CD8-positive, alpha-beta T cell (primary cell): ENCODE measurements at regions of chr5 and their contacts with region 1.

Region 1: GRCh38 chr5:179414459-179415261 is 69.4 kb upstream of the ADAMTS2 start:
- DNase-seq: peak in 2 of 9 experiments; percentile 1 to 13
- ATAC-seq: no peak
- H3K4me3 ChIP-seq: no peak overlapping the region
- H3K4me3 Mint-ChIP-seq: no peak overlapping the region
- H3K27ac ChIP-seq: no peak overlapping the region
- H3K27ac Mint-ChIP-seq: no peak overlapping the region
- H3K4me1 ChIP-seq: no peaks in the 10 kb centered on the region
- H3K4me1 Mint-ChIP-seq: no peaks in the 10 kb centered on the region
- H3K27me3 ChIP-seq: no peaks in the 10 kb centered on the region
- H3K27me3 Mint-ChIP-seq: peaks cover 5% of the 10 kb centered on the region
- CTCF ChIP-seq: no peak

Region 2: DNA sequence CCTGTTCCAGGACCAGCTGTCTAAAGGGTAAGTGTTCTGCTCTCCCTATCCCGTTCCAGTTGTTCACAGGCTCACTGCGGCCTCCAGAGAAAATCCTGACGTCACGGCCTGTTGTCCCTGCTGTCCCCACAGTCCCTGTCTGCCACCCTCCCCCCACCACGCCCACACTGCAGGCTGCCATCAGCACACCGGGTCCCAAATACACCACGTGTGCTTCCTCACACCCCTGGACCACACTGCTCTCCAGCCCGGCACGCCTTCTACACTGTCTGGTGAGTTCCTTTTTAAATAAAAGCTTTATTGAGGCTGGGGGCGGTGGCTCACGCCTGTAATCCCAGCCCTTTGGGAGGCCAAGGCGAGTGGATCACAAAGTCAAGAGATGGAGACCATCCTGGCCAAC is 47.4 kb after region 1 on chr5:
- CTCF ChIA-PET with region 1: no interaction called
- POLR2A ChIA-PET with region 1: no interaction called
- intact Hi-C with region 1: loop called in 1 of 2 experiments (anchors 2 kb)
- DNase-seq: no peak
- ATAC-seq: no peak
- H3K4me3 ChIP-seq: no peak overlapping the region
- H3K4me3 Mint-ChIP-seq: no peak overlapping the region
- H3K27ac ChIP-seq: no peak overlapping the region
- H3K27ac Mint-ChIP-seq: no peak overlapping the region
- H3K4me1 ChIP-seq: no peaks in the 10 kb centered on the region
- H3K4me1 Mint-ChIP-seq: no peaks in the 10 kb centered on the region
- H3K27me3 ChIP-seq: no peaks in the 10 kb centered on the region
- H3K27me3 Mint-ChIP-seq: peaks cover 3% of the 10 kb centered on the region
- CTCF ChIP-seq: no peak

Region 3: DNA sequence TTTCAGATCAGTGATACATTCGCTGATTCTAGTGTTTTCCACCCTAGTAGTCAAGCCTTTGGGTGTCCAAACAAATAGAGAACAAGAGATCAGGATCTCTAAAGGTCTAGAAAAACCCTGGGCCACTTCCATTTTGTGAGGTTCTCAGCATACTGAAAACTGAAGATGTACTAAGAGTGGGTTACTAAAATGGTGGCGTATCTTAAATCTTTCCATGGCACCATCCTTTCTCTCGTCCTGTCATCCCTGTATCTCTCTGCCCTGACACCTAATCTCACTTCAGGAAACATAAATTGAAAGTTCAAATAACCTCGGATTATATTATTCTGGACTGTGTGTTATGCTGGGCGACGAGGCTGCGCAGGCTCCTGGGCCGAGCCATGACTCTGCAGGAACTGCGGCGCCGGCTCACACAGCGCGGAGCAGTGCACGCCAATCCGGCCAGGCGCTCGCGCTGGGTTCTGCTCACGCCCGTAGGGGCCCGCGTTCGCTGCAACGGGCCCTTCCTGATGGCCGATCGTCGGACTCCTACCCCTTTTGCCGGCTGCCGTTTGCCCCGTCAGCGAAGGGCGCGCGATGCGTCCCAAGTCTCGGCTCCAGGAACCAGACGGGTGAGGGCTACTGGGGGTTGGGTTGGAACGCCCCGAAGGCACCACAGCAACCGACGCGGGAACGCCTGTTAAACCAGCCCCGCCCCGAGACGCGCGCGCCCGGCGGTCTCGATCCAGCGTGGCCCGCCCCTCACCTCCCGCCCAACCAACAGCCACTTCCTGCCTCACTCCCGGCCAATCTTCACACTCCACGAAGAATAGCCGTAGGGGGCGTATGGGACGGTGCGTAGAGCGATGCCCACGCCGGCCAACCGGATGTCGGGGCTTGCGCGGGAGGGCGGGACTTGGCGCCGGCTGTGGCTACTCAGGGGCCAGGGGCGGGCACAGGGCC is 283.6 kb after region 1 on chr5:
- CTCF ChIA-PET with region 1: no interaction called
- POLR2A ChIA-PET with region 1: no interaction called
- intact Hi-C with region 1: no loop called
- DNase-seq: peak; percentile 97 to 100 (median 98)
- ATAC-seq: peak; percentile 87
- H3K4me3 ChIP-seq: peak overlapping the region; percentile 84 to 89
- H3K4me3 Mint-ChIP-seq: peak overlapping the region; percentile 99
- H3K27ac ChIP-seq: peak overlapping the region; percentile 92 to 94
- H3K27ac Mint-ChIP-seq: peak overlapping the region; percentile 100
- H3K4me1 ChIP-seq: peaks cover 32% of the 10 kb centered on the region
- H3K4me1 Mint-ChIP-seq: peaks cover 40% of the 10 kb centered on the region
- H3K27me3 ChIP-seq: no peaks in the 10 kb centered on the region
- H3K27me3 Mint-ChIP-seq: no peaks in the 10 kb centered on the region
- CTCF ChIP-seq: no peak